ENCODE measurements at regions of chr20 and their contacts with region 1.

Region 1: GRCh38 chr20:34069341-34070078 is 42.5 kb downstream of the EIF2S2 start:
- DNase-seq: peak; percentile 78 to 83
- H3K4me3 ChIP-seq: no peak overlapping the region
- H3K27ac ChIP-seq: peak overlapping the region; percentile 38 to 54 (median 45)
- H3K4me1 ChIP-seq: peaks cover 26 to 35% of the 10 kb centered on the region in 2 donors
- H3K27me3 ChIP-seq: no peaks in the 10 kb centered on the region
- CTCF ChIP-seq: peak; percentile 45 to 94 (median 86)
- POLR2A ChIP-seq: no peak

Region 2: GRCh38 chr20:33947709-33948295 is 121.7 kb before region 1 on chr20:
- intact Hi-C with region 1: loop called (anchors 5 kb)
- DNase-seq: no peak
- H3K4me3 ChIP-seq: no peak overlapping the region
- H3K27ac ChIP-seq: no peak overlapping the region
- H3K4me1 ChIP-seq: no peaks in the 10 kb centered on the region
- H3K27me3 ChIP-seq: no peaks in the 10 kb centered on the region
- CTCF ChIP-seq: peak in 4 of 6 experiments; percentile 16 to 49 (median 40)
- POLR2A ChIP-seq: no peak

Region 3: DNA sequence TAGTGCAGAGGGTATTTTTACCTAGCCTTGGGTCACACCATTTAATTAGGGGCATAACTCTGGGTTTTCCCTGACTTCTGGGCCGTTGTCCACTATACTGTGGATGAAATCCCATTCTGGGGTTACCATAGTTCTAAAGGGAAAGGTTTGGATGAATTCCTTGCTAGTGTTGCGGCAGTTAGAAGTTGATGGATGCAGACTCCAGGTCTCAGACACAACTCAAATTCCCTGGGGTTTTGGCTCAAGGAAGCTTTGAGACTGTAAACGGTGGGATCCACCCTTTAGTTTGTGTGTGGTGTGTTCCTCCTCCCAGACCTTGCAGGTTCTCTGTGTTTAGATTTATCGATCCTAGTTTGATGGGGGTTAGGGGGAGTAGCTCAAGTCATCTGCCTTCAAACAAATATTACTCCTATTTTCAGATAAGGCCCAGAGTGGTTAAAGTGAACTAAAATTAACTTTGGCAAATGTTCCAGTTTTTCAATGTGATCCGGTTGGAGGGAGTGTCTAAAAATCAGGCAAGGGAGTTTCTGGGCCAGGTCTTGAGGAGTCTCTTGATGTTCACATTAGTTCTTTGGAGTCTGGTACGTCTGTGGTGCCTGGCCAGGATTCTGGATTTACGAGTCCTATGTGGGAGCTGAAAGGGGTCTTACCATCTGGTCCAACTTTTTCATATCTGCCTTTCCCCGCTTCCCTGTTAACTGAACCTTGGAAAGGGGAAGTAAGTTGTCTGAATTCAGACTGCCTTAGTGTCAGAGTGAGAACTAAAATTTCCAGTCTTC is 74.3 kb before region 1 on chr20:
- intact Hi-C with region 1: loop called (anchors 5 kb)
- DNase-seq: peak; percentile 52 to 53
- H3K4me3 ChIP-seq: peak overlapping the region; percentile 93 to 95 (median 94)
- H3K27ac ChIP-seq: peak overlapping the region; percentile 96 to 98 (median 97)
- H3K4me1 ChIP-seq: peaks cover 44 to 64% of the 10 kb centered on the region in 2 donors
- H3K27me3 ChIP-seq: no peaks in the 10 kb centered on the region
- CTCF ChIP-seq: no peak
- POLR2A ChIP-seq: peak in 1 of 2 donors; percentile 13